Naive thymus-derived CD4-positive, alpha-beta T cell (primary cell): ENCODE measurements at regions of chr17 and their contacts with region 1.

Region 1: DNA sequence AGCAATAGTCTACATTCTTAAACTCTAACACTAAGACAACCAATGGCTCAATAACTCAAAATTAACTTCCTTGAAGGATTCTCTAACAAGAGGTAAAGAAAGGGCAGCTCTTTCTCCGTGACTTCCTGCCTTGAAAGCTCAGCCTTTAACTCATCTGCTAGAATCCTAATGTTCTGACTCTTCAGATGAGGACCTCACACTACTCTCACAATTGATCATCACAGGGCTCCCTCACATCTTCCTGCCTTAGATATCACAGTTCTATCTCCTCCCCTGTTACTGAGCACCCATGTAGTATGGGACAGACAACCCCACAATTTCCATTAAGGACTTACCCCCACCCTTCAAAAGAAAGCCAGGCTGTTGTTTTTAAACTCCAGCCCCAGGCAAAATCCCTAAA is 33.5 kb downstream of the SMURF2 start:
- DNase-seq: no peak
- ATAC-seq: peak; percentile 31
- H3K4me3 ChIP-seq: no peak overlapping the region
- H3K4me3 Mint-ChIP-seq: peak overlapping the region in 8 of 10 donors; percentile 5 to 69 (median 42)
- H3K27ac ChIP-seq: no peak overlapping the region
- H3K27ac Mint-ChIP-seq: peak overlapping the region in 7 of 9 donors; percentile 21 to 56 (median 29)
- H3K4me1 ChIP-seq: peaks cover 4 to 19% of the 10 kb centered on the region in 2 donors
- H3K4me1 Mint-ChIP-seq: peaks cover 39 to 77% (median 72%) of the 10 kb centered on the region in 7 donors
- H3K27me3 ChIP-seq: no peaks in the 10 kb centered on the region
- H3K27me3 Mint-ChIP-seq: no peaks in the 10 kb centered on the region

Region 2: GRCh38 chr17:64615028-64615677 is 13.5 kb before region 1 on chr17:
- CTCF ChIA-PET with region 1: no interaction called
- POLR2A ChIA-PET with region 1: interaction called, 6 read pairs
- intact Hi-C with region 1: loop called in 1 of 2 experiments (anchors 2 kb)
- DNase-seq: no peak
- ATAC-seq: no peak
- H3K4me3 ChIP-seq: no peak overlapping the region
- H3K4me3 Mint-ChIP-seq: peak overlapping the region in 4 of 10 donors; percentile 8 to 32 (median 14)
- H3K27ac ChIP-seq: no peak overlapping the region
- H3K27ac Mint-ChIP-seq: peak overlapping the region in 3 of 9 donors; percentile 25 to 53 (median 27)
- H3K4me1 ChIP-seq: peaks cover 0 to 3% of the 10 kb centered on the region in 2 donors
- H3K4me1 Mint-ChIP-seq: peaks cover 7 to 52% (median 44%) of the 10 kb centered on the region in 7 donors
- H3K27me3 ChIP-seq: no peaks in the 10 kb centered on the region
- H3K27me3 Mint-ChIP-seq: no peaks in the 10 kb centered on the region

Region 3: GRCh38 chr17:65433592-65433991 is 805.0 kb after region 1 on chr17:
- CTCF ChIA-PET with region 1: no interaction called
- POLR2A ChIA-PET with region 1: no interaction called
- intact Hi-C with region 1: no loop called
- DNase-seq: no peak
- ATAC-seq: no peak
- H3K4me3 ChIP-seq: no peak overlapping the region
- H3K4me3 Mint-ChIP-seq: peak overlapping the region in 7 of 10 donors; percentile 8 to 69 (median 49)
- H3K27ac ChIP-seq: no peak overlapping the region
- H3K27ac Mint-ChIP-seq: peak overlapping the region in 2 of 9 donors; percentile 52 to 62
- H3K4me1 ChIP-seq: peaks cover 0 to 25% of the 10 kb centered on the region in 2 donors
- H3K4me1 Mint-ChIP-seq: peaks cover 3 to 48% (median 36%) of the 10 kb centered on the region in 7 donors
- H3K27me3 ChIP-seq: no peaks in the 10 kb centered on the region
- H3K27me3 Mint-ChIP-seq: peaks cover 5 to 25% (median 5%) of the 10 kb centered on the region in 5 donors